Adrenal gland (tissue), 19 donors: ENCODE measurements at regions of chr21 and their contacts with region 1.

Region 1: GRCh38 chr21:42315296-42315891 is at the start of gene TFF3:
- DNase-seq: peak in 2 of 7 donors; percentile 22 to 52
- H3K4me3 ChIP-seq: no peak within 1 kb of the TSS
- H3K27ac ChIP-seq: peak within 1 kb of the TSS in 1 of 5 donors; percentile 29
- H3K4me1 ChIP-seq: peaks cover 0 to 4% of the 10 kb centered on the region in 2 donors
- H3K27me3 ChIP-seq: no peaks in the 10 kb centered on the region
- CTCF ChIP-seq: no peak
- POLR2A ChIP-seq: no peak
- total RNA-seq, gene TFF3: 1.3 to 29.3 (median 10.0) TPM

Region 2: GRCh38 chr21:42376338-42376982 is 61.1 kb after region 1 on chr21:
- intact Hi-C with region 1: loop called in 1 of 2 experiments (anchors 5 kb)
- DNase-seq: peak in 1 of 7 donors; percentile 21
- H3K4me3 ChIP-seq: no peak overlapping the region
- H3K27ac ChIP-seq: no peak overlapping the region
- H3K4me1 ChIP-seq: no peaks in the 10 kb centered on the region
- H3K27me3 ChIP-seq: no peaks in the 10 kb centered on the region
- CTCF ChIP-seq: peak in 1 of 6 experiments; percentile 46
- POLR2A ChIP-seq: no peak

Region 3: DNA sequence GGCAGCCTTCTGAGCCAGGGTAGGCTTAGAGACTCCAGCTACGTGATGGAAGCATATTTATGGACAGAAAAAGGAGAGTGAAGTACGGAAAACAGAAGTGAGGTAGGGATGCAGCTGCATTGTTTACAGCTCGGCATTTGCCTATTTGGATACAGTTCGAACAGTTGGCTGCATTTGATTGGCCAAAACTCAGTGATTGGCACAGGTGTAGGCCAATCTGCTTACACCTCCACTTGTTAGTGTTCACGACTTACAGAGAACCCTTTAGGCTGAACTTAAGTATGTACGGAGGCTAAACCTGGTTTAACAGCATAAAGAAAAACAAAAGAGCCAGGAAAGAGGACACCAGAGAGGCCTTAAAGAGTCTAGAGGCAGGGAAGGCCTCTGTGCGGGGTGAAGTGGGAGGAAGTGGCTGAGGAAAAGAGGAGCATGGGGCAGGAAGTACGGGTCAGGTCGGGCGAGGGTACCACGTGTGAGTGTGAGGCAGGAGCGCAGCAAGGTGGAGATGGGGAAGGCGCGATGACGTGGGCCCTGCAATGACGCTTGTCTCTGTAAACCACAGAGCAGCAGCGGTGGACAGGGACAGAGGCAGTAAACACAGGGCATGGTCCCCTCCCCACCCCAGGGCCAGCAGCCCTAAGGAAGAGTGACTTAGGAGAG is 148.6 kb after region 1 on chr21:
- intact Hi-C with region 1: no loop called
- DNase-seq: peak in 4 of 7 donors; percentile 45 to 84 (median 62)
- H3K4me3 ChIP-seq: no peak overlapping the region
- H3K27ac ChIP-seq: no peak overlapping the region
- H3K4me1 ChIP-seq: no peaks in the 10 kb centered on the region
- H3K27me3 ChIP-seq: no peaks in the 10 kb centered on the region
- CTCF ChIP-seq: no peak
- POLR2A ChIP-seq: no peak

Region 4: GRCh38 chr21:42806509-42807140 is 491.2 kb after region 1 on chr21:
- intact Hi-C with region 1: no loop called
- DNase-seq: no peak
- H3K4me3 ChIP-seq: no peak overlapping the region
- H3K27ac ChIP-seq: no peak overlapping the region
- H3K4me1 ChIP-seq: no peaks in the 10 kb centered on the region
- H3K27me3 ChIP-seq: no peaks in the 10 kb centered on the region
- CTCF ChIP-seq: no peak
- POLR2A ChIP-seq: no peak